HEK293T (cell line): ENCODE measurements at regions of chr1 and their contacts with region 1.

Region 1: DNA sequence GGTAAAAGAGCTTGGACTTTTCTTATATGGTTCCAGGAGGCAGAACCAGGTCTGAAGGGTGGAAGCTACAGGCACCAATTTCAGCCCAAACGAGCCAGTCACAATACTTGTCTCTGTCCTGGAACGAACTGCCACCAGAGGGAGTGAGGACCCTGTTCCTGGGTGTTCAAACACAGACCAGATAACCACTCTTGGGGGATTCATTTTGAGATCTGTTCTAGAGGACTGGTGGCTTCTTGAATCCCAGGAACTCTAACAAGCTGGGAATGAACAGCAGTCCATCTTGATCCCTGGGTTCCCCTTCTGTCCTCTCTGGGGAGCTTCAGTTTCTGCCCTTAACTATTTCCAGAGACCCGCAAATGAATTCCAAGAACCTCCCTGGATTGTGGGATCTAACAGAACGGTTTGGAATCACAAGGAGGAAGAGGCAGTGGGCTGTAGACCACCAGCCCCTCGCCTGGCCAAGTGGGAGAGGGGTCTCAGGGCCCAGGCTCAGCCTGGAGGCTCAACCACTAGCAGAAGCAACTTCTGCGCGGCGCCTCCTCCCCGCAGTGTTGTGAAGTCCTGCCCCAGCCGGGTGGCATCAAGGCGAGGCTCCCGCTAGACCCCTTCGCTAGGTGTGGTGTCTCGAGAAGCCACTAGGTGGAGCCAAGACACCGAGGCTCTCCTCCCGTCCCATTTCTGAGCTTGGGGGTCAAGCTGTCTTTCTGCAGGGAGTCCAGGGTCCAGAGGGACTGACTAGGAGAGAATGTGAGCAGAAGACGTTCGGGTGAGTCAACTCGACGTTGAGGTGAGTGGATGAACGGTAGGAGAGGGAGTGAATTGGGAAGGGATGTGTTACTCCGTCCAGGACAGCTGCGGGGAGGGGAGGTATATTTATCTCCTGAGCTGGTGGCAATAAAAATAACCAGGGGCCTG is 12.1 kb upstream of the NES start:
- DNase-seq: peak; percentile 92

Region 2: DNA sequence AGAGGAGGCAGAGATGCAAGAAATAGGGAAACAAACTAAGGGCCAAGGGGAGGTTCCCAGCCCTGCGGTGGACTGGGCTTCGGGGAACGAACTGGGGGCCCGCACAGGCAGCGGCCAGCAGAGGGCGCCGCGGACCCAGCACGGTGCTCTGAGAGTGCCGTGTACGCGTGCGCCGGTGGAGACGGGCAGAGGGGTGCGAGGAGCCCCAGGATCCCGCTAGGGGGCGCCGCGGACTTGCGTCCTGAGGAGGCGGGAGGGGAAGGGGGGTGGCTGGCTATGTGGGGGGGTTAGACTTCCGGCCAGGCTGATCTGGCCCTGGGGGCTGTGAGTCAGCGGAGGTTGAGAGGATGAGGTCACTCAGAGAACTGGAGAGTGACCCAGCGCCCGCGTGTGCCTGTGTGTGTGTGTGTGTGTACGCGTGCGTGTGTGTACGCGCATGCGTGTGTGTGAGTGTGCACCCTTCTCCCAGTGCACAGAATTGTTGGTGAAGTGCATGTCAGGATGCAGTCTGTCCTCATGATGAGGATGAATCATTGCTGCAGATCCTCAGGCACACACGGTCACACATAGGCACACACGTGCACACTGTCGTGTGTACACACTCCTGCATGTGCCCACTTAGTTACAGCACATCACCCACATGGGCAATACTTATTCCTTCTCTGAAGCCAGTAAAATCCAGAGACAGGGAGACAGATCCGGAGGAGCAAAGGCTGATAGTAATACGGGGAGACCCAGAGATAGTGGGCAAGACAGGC is 29.1 kb before region 1 on chr1:
- CTCF ChIA-PET with region 1: interaction called, 22 read pairs
- POLR2A ChIA-PET with region 1: interaction called, 10 read pairs
- DNase-seq: peak; percentile 100

Region 3: DNA sequence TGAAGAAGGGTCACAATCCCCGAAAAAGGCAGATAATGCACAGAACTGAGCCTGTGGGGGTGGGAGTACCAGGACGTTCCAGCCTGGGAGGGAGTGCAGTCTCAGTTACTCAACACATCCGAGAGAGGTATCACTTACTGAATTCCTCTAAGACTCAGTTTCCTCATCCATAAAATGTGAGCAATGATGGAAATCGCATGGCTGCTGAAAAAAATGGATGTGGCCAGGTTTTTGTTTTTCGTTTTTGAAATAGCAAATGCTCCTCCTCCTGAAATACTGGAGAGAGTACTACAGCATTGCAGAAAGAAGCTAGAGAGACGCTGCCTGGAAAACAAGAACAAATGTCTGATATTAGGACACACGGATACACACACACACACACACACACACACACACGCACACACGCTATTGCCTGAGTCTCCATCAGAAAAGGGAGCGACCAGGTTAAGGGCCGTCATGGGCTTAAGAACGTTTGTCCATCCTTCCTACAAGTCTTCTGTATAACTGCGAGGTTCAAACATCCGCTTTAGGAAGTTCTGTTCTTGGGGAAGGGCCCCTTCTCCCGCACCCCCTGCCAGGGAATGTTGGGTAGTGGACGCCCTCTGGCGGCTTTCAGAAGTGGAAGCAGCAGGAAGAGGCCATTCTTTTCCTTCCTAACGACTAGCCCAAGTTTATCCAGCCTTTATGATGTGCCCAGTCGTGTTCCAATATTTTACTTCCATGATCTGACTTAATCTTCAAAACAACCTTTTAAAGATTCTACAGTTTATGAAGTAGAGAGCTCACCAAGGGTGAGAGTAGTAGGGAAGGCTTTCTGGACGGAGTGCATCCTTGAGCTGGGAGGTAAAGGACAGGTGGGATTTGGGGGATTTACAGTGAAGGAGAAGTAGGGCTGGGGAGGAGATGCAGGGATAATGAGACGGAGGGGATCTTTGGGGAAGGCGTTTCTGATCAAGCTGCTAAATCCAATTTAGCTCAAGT is 11.4 kb before region 1 on chr1:
- CTCF ChIA-PET with region 1: interaction called, 23 read pairs
- POLR2A ChIA-PET with region 1: no interaction called
- DNase-seq: peak; percentile 80

Region 4: GRCh38 chr1:156721535-156721934 is 32.2 kb after region 1 on chr1:
- CTCF ChIA-PET with region 1: interaction called, 429 read pairs
- POLR2A ChIA-PET with region 1: interaction called, 137 read pairs
- DNase-seq: no peak

Region 5: GRCh38 chr1:156767101-156767878 is 78.0 kb after region 1 on chr1 and contains the start of gene PRCC:
- CTCF ChIA-PET with region 1: interaction called, 15 read pairs
- POLR2A ChIA-PET with region 1: no interaction called
- DNase-seq: peak; percentile 95

Region 6: GRCh38 chr1:156886583-156887281 is 197.4 kb after region 1 on chr1:
- CTCF ChIA-PET with region 1: interaction called, 38 read pairs
- POLR2A ChIA-PET with region 1: no interaction called
- DNase-seq: no peak

Region 7: GRCh38 chr1:156970017-156970416 is 280.7 kb after region 1 on chr1:
- CTCF ChIA-PET with region 1: no interaction called
- POLR2A ChIA-PET with region 1: no interaction called
- DNase-seq: no peak